Naive thymus-derived CD4-positive, alpha-beta T cell (primary cell): ENCODE measurements at regions of chr2 and their contacts with region 1.

Region 1: GRCh38 chr2:148552675-148553331 is 91.7 kb upstream of the EPC2 start:
- DNase-seq: peak in 7 of 9 donors; percentile 18 to 64 (median 53)
- ATAC-seq: peak; percentile 77
- H3K4me3 ChIP-seq: peak overlapping the region; percentile 75
- H3K4me3 Mint-ChIP-seq: no peak overlapping the region
- H3K27ac ChIP-seq: peak overlapping the region; percentile 70
- H3K27ac Mint-ChIP-seq: no peak overlapping the region
- H3K4me1 ChIP-seq: peaks cover 5 to 12% of the 10 kb centered on the region in 2 donors
- H3K4me1 Mint-ChIP-seq: peaks cover 1 to 13% (median 7%) of the 10 kb centered on the region in 7 donors
- H3K27me3 ChIP-seq: no peaks in the 10 kb centered on the region
- H3K27me3 Mint-ChIP-seq: no peaks in the 10 kb centered on the region

Region 2: DNA sequence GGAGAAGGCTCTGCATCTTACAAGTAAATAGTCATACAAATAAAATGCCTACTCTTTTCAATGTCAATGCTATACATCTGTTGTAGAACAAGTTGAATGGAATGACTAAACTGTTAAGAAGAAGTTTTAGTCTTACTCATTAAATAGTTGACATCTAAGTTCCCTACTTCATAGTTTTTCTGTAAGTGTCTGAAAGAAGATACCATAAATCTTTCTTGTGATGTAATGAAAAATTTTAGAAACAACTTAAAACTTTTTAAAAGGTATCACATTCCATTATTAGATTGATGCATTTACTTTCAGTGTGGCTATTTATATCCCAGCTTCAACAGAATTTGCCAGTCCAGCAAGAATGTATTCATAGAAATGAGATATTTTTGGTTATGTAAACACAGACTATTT is 93.4 kb before region 1 on chr2:
- CTCF ChIA-PET with region 1: no interaction called
- POLR2A ChIA-PET with region 1: no interaction called
- intact Hi-C with region 1: no loop called
- DNase-seq: no peak
- ATAC-seq: no peak
- H3K4me3 ChIP-seq: no peak overlapping the region
- H3K4me3 Mint-ChIP-seq: no peak overlapping the region
- H3K27ac ChIP-seq: no peak overlapping the region
- H3K27ac Mint-ChIP-seq: no peak overlapping the region
- H3K4me1 ChIP-seq: no peaks in the 10 kb centered on the region
- H3K4me1 Mint-ChIP-seq: peaks cover 0 to 4% (median 0%) of the 10 kb centered on the region in 7 donors
- H3K27me3 ChIP-seq: no peaks in the 10 kb centered on the region
- H3K27me3 Mint-ChIP-seq: no peaks in the 10 kb centered on the region

Region 3: GRCh38 chr2:148540022-148540421 is 12.8 kb before region 1 on chr2:
- CTCF ChIA-PET with region 1: interaction called, 3 read pairs
- POLR2A ChIA-PET with region 1: interaction called, 38 read pairs
- intact Hi-C with region 1: no loop called
- DNase-seq: peak in 4 of 9 donors; percentile 32 to 42 (median 40)
- ATAC-seq: peak; percentile 60
- H3K4me3 ChIP-seq: peak overlapping the region; percentile 10
- H3K4me3 Mint-ChIP-seq: peak overlapping the region; percentile 47 to 78 (median 60)
- H3K27ac ChIP-seq: no peak overlapping the region
- H3K27ac Mint-ChIP-seq: peak overlapping the region; percentile 48 to 93 (median 89)
- H3K4me1 ChIP-seq: peaks cover 0 to 28% of the 10 kb centered on the region in 2 donors
- H3K4me1 Mint-ChIP-seq: peaks cover 21 to 77% (median 59%) of the 10 kb centered on the region in 7 donors
- H3K27me3 ChIP-seq: no peaks in the 10 kb centered on the region
- H3K27me3 Mint-ChIP-seq: peaks cover 0 to 4% (median 0%) of the 10 kb centered on the region in 5 donors

Region 4: GRCh38 chr2:148603562-148603920 is 50.7 kb after region 1 on chr2:
- CTCF ChIA-PET with region 1: no interaction called
- POLR2A ChIA-PET with region 1: no interaction called
- intact Hi-C with region 1: loop called in 1 of 2 experiments (anchors 2 kb)
- DNase-seq: no peak
- ATAC-seq: no peak
- H3K4me3 ChIP-seq: no peak overlapping the region
- H3K4me3 Mint-ChIP-seq: peak overlapping the region in 1 of 10 donors; percentile 17
- H3K27ac ChIP-seq: no peak overlapping the region
- H3K27ac Mint-ChIP-seq: peak overlapping the region in 1 of 9 donors; percentile 56
- H3K4me1 ChIP-seq: no peaks in the 10 kb centered on the region
- H3K4me1 Mint-ChIP-seq: peaks cover 0 to 16% (median 2%) of the 10 kb centered on the region in 7 donors
- H3K27me3 ChIP-seq: no peaks in the 10 kb centered on the region
- H3K27me3 Mint-ChIP-seq: peaks cover 0 to 5% (median 0%) of the 10 kb centered on the region in 5 donors